Naive thymus-derived CD4-positive, alpha-beta T cell (primary cell): ENCODE measurements at regions of chrX and their contacts with region 1.

Region 1: GRCh38 chrX:119468930-119469635 is 839 bp downstream of the SLC25A5 start:
- DNase-seq: peak; percentile 81 to 90 (median 87)
- ATAC-seq: peak; percentile 87
- H3K4me3 ChIP-seq: peak overlapping the region; percentile 87
- H3K4me3 Mint-ChIP-seq: peak overlapping the region; percentile 78 to 97 (median 89)
- H3K27ac ChIP-seq: peak overlapping the region; percentile 99
- H3K27ac Mint-ChIP-seq: peak overlapping the region; percentile 82 to 95 (median 89)
- H3K4me1 ChIP-seq: peaks cover 5 to 6% of the 10 kb centered on the region in 2 donors
- H3K4me1 Mint-ChIP-seq: peaks cover 0 to 17% (median 10%) of the 10 kb centered on the region in 7 donors
- H3K27me3 ChIP-seq: no peaks in the 10 kb centered on the region
- H3K27me3 Mint-ChIP-seq: no peaks in the 10 kb centered on the region

Region 2: DNA sequence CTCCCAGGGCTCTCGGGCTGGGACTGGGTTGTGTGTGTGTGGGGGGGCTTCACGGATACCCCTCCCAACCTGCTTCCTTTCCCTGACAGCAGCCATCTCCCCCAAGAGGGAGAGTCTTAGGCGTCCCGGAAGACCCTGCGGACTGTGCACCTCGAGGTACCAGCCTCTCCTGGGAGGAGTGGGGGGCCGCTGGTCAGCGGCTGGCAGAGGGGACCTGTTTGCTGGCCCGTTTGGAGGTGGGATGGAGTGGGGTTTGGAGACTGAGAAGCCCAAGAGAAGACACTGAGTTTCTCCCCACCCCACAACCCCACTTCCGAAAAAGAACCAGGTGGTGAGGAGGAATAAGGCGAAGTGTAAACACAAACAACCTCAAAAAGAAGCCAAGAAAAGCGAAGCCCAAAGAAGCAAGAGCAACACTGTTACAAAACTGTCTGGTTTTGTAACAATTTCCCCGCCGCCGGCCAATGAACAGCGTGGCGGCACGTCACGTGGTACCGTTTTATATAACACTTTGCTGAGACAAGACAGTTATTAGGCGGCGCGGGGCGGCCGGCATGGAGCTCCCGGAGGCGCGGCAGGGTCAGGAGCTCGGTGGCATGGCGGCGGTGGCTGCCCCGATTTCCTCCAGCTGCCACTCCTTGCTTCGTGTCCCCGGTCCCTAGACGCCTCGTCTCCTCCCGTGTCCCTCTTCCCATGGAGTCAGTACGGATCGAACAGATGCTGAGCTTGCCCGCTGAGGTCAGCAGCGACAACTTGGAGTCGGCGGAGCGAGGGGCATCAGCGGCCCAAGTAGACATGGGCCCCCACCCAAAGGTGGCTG is 494.8 kb before region 1 on chrX and contains the start of gene LONRF3:
- CTCF ChIA-PET with region 1: no interaction called
- POLR2A ChIA-PET with region 1: no interaction called
- intact Hi-C with region 1: loop called in 1 of 2 experiments (anchors 10 kb)
- DNase-seq: peak; percentile 26 to 71 (median 56)
- ATAC-seq: peak; percentile 65
- H3K4me3 ChIP-seq: peak within 1 kb of the TSS; percentile 64
- H3K4me3 Mint-ChIP-seq: peak within 1 kb of the TSS; percentile 86 to 100 (median 92)
- H3K27ac ChIP-seq: peak within 1 kb of the TSS; percentile 74
- H3K27ac Mint-ChIP-seq: peak within 1 kb of the TSS; percentile 38 to 94 (median 90)
- H3K4me1 ChIP-seq: peaks cover 0 to 3% of the 10 kb centered on the region in 2 donors
- H3K4me1 Mint-ChIP-seq: peaks cover 0 to 24% (median 17%) of the 10 kb centered on the region in 7 donors
- H3K27me3 ChIP-seq: no peaks in the 10 kb centered on the region
- H3K27me3 Mint-ChIP-seq: peaks cover 0 to 57% (median 5%) of the 10 kb centered on the region in 5 donors
- total RNA-seq, gene LONRF3: 0.07 to 17.8 (median 11.5) TPM

Region 3: DNA sequence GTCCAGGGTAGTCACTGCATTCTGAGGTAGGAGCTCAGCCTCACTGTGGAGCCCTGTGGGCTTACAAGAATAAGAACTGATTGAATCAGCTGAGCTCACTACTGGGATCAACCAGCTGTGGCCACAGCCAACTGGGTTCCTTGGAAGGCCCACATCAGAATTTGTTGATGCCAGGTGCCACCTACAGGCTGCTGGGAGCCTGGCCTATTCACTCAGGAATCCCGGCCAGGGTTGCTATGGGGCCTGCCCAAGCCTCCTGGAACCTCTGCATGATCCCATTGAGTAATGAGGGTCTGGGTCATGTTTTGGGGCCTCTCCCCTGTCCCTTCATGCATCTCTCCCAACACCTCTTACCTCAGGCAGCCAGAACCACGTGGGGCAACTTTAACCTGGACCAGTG is 287.6 kb before region 1 on chrX:
- CTCF ChIA-PET with region 1: no interaction called
- POLR2A ChIA-PET with region 1: no interaction called
- intact Hi-C with region 1: no loop called
- DNase-seq: no peak
- ATAC-seq: no peak
- H3K4me3 ChIP-seq: no peak overlapping the region
- H3K4me3 Mint-ChIP-seq: no peak overlapping the region
- H3K27ac ChIP-seq: no peak overlapping the region
- H3K27ac Mint-ChIP-seq: no peak overlapping the region
- H3K4me1 ChIP-seq: no peaks in the 10 kb centered on the region
- H3K4me1 Mint-ChIP-seq: no peaks in the 10 kb centered on the region
- H3K27me3 ChIP-seq: no peaks in the 10 kb centered on the region
- H3K27me3 Mint-ChIP-seq: peaks cover 0 to 4% (median 0%) of the 10 kb centered on the region in 5 donors

Region 4: GRCh38 chrX:119482481-119483480 is 13.7 kb after region 1 on chrX:
- CTCF ChIA-PET with region 1: interaction called, 5 read pairs
- POLR2A ChIA-PET with region 1: interaction called, 7 read pairs
- intact Hi-C with region 1: loop called (anchors 1 kb)
- DNase-seq: peak; percentile 41 to 66 (median 55)
- ATAC-seq: peak; percentile 96
- H3K4me3 ChIP-seq: peak overlapping the region; percentile 54
- H3K4me3 Mint-ChIP-seq: peak overlapping the region; percentile 65 to 89 (median 83)
- H3K27ac ChIP-seq: peak overlapping the region; percentile 16
- H3K27ac Mint-ChIP-seq: peak overlapping the region in 8 of 9 donors; percentile 51 to 85 (median 70)
- H3K4me1 ChIP-seq: peaks cover 0 to 4% of the 10 kb centered on the region in 2 donors
- H3K4me1 Mint-ChIP-seq: peaks cover 0 to 16% (median 6%) of the 10 kb centered on the region in 7 donors
- H3K27me3 ChIP-seq: no peaks in the 10 kb centered on the region
- H3K27me3 Mint-ChIP-seq: no peaks in the 10 kb centered on the region

Region 5: DNA sequence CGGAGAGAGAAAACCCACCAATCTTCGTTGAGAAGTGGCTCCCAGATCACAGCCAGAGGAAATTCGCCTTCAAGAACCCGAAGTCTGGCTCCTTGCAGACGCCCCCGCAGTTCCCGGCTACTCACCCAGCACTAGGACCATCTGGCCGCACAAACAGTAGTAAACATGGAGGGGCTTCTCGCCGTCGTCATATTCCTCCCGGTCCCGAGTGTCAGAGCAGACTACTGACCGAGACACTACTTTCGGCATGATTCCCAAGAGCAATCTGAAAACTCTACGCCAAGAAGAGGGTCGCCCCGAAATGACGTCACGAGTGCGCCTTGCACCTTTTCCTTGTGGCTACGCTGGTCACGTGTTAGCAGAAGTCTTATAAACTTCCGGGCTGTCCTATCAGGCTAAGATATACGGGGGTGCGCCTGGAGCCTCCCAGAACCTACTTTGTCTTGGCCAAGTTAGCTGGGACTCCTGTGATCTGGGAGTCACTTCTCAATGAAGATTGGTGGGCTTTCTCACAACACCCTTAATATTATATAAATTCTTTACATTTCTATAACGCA is 96.1 kb after region 1 on chrX and contains the start of gene STEEP1:
- CTCF ChIA-PET with region 1: no interaction called
- POLR2A ChIA-PET with region 1: no interaction called
- intact Hi-C with region 1: loop called in 1 of 2 experiments (anchors 2 kb)
- DNase-seq: peak; percentile 60 to 87 (median 83)
- ATAC-seq: peak; percentile 98
- H3K4me3 ChIP-seq: peak within 1 kb of the TSS; percentile 85
- H3K4me3 Mint-ChIP-seq: peak within 1 kb of the TSS; percentile 86 to 95 (median 94)
- H3K27ac ChIP-seq: peak within 1 kb of the TSS; percentile 82
- H3K27ac Mint-ChIP-seq: peak within 1 kb of the TSS; percentile 86 to 97 (median 95)
- H3K4me1 ChIP-seq: no peaks in the 10 kb centered on the region
- H3K4me1 Mint-ChIP-seq: peaks cover 11 to 30% (median 21%) of the 10 kb centered on the region in 7 donors
- H3K27me3 ChIP-seq: no peaks in the 10 kb centered on the region
- H3K27me3 Mint-ChIP-seq: no peaks in the 10 kb centered on the region
- total RNA-seq, gene STEEP1: 19.9 to 21.8 (median 20.9) TPM

Region 6: GRCh38 chrX:119693040-119693995 is 224.2 kb after region 1 on chrX and contains the start of gene SEPTIN6:
- CTCF ChIA-PET with region 1: no interaction called
- POLR2A ChIA-PET with region 1: interaction called, 6 read pairs
- intact Hi-C with region 1: loop called (anchors 1 to 5 kb)
- DNase-seq: peak; percentile 69 to 93 (median 88)
- ATAC-seq: peak; percentile 83
- H3K4me3 ChIP-seq: peak within 1 kb of the TSS; percentile 77
- H3K4me3 Mint-ChIP-seq: peak within 1 kb of the TSS; percentile 96 to 100 (median 99)
- H3K27ac ChIP-seq: peak within 1 kb of the TSS; percentile 89
- H3K27ac Mint-ChIP-seq: peak within 1 kb of the TSS; percentile 95 to 99 (median 98)
- H3K4me1 ChIP-seq: peaks cover 0 to 7% of the 10 kb centered on the region in 2 donors
- H3K4me1 Mint-ChIP-seq: peaks cover 7 to 41% (median 13%) of the 10 kb centered on the region in 7 donors
- H3K27me3 ChIP-seq: no peaks in the 10 kb centered on the region
- H3K27me3 Mint-ChIP-seq: no peaks in the 10 kb centered on the region
- total RNA-seq, gene SEPTIN6: 151 to 315 (median 221) TPM

Region 7: GRCh38 chrX:119852382-119853353 is 383.6 kb after region 1 on chrX and contains the start of gene UPF3B:
- CTCF ChIA-PET with region 1: no interaction called
- POLR2A ChIA-PET with region 1: no interaction called
- intact Hi-C with region 1: loop called (anchors 1 to 2 kb)
- DNase-seq: peak; percentile 67 to 96 (median 92)
- ATAC-seq: peak; percentile 98
- H3K4me3 ChIP-seq: peak within 1 kb of the TSS; percentile 88
- H3K4me3 Mint-ChIP-seq: peak within 1 kb of the TSS; percentile 89 to 100 (median 98)
- H3K27ac ChIP-seq: peak within 1 kb of the TSS; percentile 95
- H3K27ac Mint-ChIP-seq: peak within 1 kb of the TSS; percentile 87 to 99 (median 97)
- H3K4me1 ChIP-seq: no peaks in the 10 kb centered on the region
- H3K4me1 Mint-ChIP-seq: peaks cover 3 to 29% (median 23%) of the 10 kb centered on the region in 7 donors
- H3K27me3 ChIP-seq: no peaks in the 10 kb centered on the region
- H3K27me3 Mint-ChIP-seq: peaks cover 0 to 3% (median 0%) of the 10 kb centered on the region in 5 donors
- total RNA-seq, gene UPF3B: 7.6 to 12.6 (median 11.3) TPM

Region 8: DNA sequence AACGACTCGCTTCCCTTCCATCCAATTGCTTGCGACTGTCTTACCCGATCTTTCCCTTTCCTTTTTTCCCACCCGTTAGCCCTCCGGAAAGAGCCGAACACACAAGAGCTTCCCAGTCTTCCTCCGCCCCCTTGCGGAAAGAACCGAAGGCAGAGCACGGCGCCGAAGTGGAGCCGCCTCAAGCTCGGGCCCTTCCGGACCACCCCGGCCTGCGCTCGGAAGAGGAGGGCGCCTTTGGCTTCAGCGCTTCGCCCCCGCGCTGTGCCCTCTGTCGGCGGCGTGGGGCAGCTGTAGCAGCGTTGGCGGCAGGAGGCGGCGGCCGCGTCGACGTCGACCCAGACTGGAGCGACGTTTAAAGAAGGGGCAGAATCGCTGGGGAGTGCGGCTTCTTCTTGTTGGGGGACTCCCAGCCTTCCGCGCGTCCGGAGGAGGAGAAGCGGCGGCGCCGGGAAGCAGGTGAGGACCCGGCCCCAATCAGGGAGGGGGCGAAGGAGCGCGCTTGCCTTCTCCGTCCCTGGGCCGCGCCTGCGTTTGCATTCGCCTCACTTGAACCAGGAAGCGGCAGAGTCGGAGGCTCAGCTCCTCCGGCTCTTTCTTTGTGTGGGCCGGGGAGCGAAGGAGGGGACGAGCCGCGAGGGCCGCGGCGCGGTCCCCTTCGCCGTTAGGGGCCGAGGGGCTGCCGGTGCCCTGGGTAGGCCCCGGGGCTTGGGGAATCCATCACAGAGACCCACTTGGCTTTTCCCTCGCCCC is 781.6 kb after region 1 on chrX and contains the start of gene ZBTB33:
- CTCF ChIA-PET with region 1: no interaction called
- POLR2A ChIA-PET with region 1: no interaction called
- intact Hi-C with region 1: loop called in 1 of 2 experiments (anchors 2 kb)
- DNase-seq: peak; percentile 69 to 88 (median 82)
- ATAC-seq: peak; percentile 100
- H3K4me3 ChIP-seq: peak within 1 kb of the TSS; percentile 79
- H3K4me3 Mint-ChIP-seq: peak within 1 kb of the TSS; percentile 84 to 97 (median 94)
- H3K27ac ChIP-seq: peak within 1 kb of the TSS; percentile 96
- H3K27ac Mint-ChIP-seq: peak within 1 kb of the TSS; percentile 93 to 98 (median 96)
- H3K4me1 ChIP-seq: peaks cover 0 to 7% of the 10 kb centered on the region in 2 donors
- H3K4me1 Mint-ChIP-seq: peaks cover 6 to 42% (median 28%) of the 10 kb centered on the region in 7 donors
- H3K27me3 ChIP-seq: no peaks in the 10 kb centered on the region
- H3K27me3 Mint-ChIP-seq: peaks cover 0 to 4% (median 0%) of the 10 kb centered on the region in 5 donors
- total RNA-seq, gene ZBTB33: 15.3 to 30.7 (median 26.3) TPM